Cardiac septum (tissue), 1 donor: ENCODE measurements at regions of chr11 and their contacts with region 1.

Region 1: GRCh38 chr11:125429166-125429707 is 66.8 kb downstream of the FEZ1 start:
- DNase-seq: peak; percentile 75

Region 2: GRCh38 chr11:125345421-125346178 is 83.6 kb before region 1 on chr11:
- intact Hi-C with region 1: loop called (anchors 5 kb)
- DNase-seq: peak; percentile 87

Region 3: DNA sequence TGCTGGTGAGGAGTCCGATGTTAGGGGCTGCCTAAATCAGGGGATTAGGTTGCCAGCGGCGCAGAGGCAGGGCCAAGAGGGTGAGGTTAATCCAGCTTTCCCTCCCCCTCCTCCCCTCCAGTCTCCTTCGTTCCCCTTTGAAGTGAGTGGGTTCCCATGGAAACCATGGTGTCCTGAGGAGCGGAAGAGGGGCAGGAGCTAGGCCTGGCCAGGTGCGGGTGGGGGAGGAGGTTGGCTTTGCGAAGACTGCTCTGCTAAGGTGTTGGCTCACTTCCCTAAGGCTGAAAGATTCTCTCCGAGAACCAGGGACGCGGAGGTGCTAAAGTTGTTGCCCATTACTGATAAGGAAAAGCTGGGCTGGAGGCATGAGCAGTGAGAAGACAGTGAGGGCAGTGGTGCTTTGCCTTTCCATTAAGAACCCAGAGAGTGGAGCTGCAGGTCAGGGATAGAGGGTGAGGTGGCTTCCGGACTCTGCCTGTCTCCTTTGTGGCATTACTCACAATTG is 57.8 kb before region 1 on chr11:
- intact Hi-C with region 1: loop called (anchors 5 kb)
- DNase-seq: no peak

Region 4: GRCh38 chr11:125464270-125464662 is 35.0 kb after region 1 on chr11:
- intact Hi-C with region 1: no loop called
- DNase-seq: no peak

Region 5: GRCh38 chr11:125609545-125609944 is 180.3 kb after region 1 on chr11:
- intact Hi-C with region 1: no loop called
- DNase-seq: no peak

Region 6: DNA sequence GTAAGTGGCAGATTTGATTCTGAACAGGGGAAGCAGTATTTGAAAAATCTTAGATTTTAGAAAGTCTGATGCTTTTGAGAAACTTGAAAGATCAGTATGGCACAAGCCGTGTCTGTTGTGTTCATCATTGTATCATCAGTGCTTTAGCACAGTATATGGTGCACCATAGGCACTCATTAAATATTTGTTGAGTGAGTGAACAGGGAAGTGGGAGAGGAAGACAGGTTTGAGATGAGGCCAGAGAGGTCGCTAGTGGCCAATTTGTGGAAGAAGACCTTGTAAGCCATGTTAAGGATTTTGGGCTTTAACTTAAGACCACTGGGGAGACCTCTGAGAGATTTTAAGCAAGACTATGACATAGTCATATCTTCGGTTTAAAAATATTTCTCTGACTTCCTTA is 208.6 kb after region 1 on chr11:
- intact Hi-C with region 1: no loop called
- DNase-seq: no peak

Region 7: GRCh38 chr11:125874556-125875124 is 445.4 kb after region 1 on chr11:
- intact Hi-C with region 1: no loop called
- DNase-seq: no peak